ENCODE measurements at regions of chr22 and their contacts with region 1.

Region 1: GRCh38 chr22:44684506-44685383 is 17.3 kb upstream of the PRR5 start:
- H3K4me3 ChIP-seq: no peak overlapping the region
- H3K27ac ChIP-seq: no peak overlapping the region
- H3K4me1 ChIP-seq: peaks cover 2% of the 10 kb centered on the region; the same call in 1 of the 2 replicates
- CTCF ChIP-seq: peak; percentile 93

Region 2: DNA sequence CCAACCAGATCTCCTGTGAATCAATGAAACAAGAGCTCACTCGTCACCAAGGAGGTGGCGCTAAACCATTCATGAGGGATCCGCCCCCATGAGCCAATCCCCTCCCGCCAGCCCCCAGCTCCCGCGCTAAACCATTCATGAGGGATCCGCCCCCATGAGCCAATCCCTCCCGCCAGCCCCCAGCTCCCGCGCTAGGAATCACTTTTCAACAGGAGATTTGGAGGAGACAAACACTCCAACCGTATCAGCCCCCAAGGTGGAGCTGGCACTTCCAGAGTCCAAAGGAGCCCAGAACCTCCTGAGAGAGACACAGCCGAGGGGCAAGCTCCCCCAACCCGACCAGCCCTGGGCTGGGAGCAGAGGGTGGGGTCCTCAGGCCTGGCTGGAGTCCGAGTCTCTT is 23.7 kb before region 1 on chr22:
- CTCF ChIA-PET with region 1: interaction called, 10 read pairs
- POLR2A ChIA-PET with region 1: no interaction called
- H3K4me3 ChIP-seq: no peak overlapping the region
- H3K27ac ChIP-seq: no peak overlapping the region
- H3K4me1 ChIP-seq: no peaks in the 10 kb centered on the region
- CTCF ChIP-seq: no peak

Region 3: GRCh38 chr22:44669561-44669976 is 15.2 kb before region 1 on chr22:
- CTCF ChIA-PET with region 1: interaction called, 20 read pairs
- POLR2A ChIA-PET with region 1: interaction called, 6 read pairs
- H3K4me3 ChIP-seq: no peak overlapping the region
- H3K27ac ChIP-seq: no peak overlapping the region
- H3K4me1 ChIP-seq: no peaks in the 10 kb centered on the region
- CTCF ChIP-seq: peak; percentile 26; the same call in 1 of the 2 replicates

Region 4: DNA sequence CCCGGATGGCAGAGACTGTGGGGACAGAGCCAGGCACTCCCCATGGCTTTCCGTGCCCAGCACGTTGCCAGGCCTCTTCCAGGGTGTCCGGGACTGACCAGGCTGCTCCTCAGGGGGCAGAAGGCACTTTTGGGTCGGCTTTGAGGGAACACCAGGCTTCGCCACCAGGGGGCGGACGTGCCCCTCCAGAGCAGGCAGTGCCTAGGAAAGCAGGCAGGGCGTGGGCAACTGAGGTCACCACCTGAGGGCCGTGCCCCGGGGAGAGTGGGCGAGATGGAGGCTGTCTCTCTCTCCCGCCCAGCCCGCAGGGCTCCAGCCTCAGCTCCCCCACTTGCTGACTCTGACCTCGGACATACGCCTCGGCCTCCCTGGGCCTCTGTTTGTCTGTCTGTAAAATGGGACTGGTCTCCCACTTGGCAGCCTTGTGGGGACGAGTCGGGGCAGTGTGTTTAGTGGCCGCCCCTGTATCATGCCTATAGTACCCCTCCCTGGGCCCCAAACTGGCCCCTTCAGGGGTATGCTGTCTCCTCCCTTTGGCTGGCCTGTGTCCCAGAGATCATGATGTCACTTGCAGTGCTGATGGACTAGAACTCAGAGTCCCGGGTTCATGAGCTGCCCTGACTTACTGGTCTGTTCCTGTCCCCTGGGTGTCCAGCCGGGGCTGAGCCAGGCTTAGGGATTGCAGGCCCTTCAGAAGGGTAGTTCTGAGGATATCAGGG is 12.8 kb after region 1 on chr22:
- CTCF ChIA-PET with region 1: interaction called, 49 read pairs
- POLR2A ChIA-PET with region 1: interaction called, 9 read pairs
- H3K4me3 ChIP-seq: no peak overlapping the region
- H3K27ac ChIP-seq: no peak overlapping the region
- H3K4me1 ChIP-seq: no peaks in the 10 kb centered on the region
- CTCF ChIP-seq: peak; percentile 92

Region 5: GRCh38 chr22:44753544-44754194 is 68.9 kb after region 1 on chr22:
- CTCF ChIA-PET with region 1: interaction called, 14 read pairs
- POLR2A ChIA-PET with region 1: no interaction called
- H3K4me3 ChIP-seq: peak overlapping the region; percentile 57
- H3K27ac ChIP-seq: peak overlapping the region; percentile 1; the same call in 1 of the 2 replicates
- H3K4me1 ChIP-seq: peaks cover 20% of the 10 kb centered on the region
- CTCF ChIP-seq: no peak

Measured in HEK293 (cell line).